ENCODE measurements at regions of chr13 and their contacts with region 1.

Region 1: GRCh38 chr13:113474179-113474578 is 16.3 kb downstream of the DCUN1D2 start:
- DNase-seq: no peak

Region 2: DNA sequence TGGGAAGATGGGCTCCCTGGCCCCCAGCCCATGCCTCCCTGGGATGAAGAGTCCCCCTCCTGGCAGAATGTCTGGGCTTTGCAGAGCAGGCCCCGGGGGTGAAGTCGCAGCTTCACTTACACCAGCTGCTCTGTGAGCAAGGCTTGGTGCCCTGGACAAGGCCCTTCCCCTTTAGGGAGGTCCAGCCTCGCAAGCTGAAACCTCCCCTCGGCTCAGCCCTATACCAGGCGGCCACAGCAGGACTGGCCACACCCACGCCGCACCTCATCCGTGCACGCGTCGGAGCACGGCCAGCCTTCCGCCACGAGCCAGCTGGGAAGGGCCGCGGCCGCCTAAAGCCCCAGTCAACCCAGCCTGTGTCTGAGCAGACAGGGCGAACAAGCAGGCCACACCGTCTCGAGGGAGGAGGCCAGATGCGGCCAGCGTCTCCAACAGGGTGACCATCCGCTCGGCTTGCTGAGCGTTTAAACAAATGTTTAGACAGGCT is 588.4 kb before region 1 on chr13:
- intact Hi-C with region 1: no loop called
- DNase-seq: peak; percentile 81

Region 3: GRCh38 chr13:112968380-112968907 is 505.7 kb before region 1 on chr13:
- intact Hi-C with region 1: no loop called
- DNase-seq: peak; percentile 77

Region 4: DNA sequence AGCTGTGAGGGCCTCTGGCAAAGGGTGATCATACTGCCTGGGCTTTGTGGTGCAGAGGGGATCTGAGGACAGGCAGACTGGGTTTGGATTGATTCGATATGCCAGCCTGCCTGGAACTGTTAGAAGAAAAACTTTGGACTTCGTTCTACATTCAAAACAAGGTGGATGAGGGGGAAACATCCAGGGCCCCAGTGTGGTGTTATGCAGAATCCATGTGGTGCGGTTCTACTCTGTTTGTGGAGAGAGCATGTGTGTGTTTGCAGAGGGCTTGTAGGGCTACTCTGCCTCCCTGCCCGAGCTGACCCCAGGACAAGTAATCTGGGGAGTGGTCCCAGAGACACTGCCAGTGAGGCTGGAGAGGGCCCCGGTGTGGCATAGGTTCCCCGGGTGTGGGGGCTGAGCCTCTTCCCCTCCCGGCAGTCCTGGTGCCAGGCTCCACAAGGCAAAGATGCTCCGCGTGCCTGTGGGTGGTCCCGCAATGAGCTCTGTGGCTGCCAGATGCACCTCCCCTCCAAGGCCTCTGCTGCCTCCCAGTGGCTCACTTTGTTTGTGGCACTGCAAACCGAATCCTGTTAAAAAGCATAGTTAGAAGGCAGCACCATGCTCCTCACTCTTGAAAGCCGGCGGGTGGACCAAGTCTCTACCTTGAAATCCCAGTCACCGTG is 88.0 kb after region 1 on chr13:
- intact Hi-C with region 1: loop called (anchors 5 kb)
- DNase-seq: no peak